Activated CD8-positive, alpha-beta T cell treated with anti-CD3 and anti-CD28 coated beads for 36 hours (primary cell): ENCODE measurements at regions of chr12 and their contacts with region 1.

Region 1: DNA sequence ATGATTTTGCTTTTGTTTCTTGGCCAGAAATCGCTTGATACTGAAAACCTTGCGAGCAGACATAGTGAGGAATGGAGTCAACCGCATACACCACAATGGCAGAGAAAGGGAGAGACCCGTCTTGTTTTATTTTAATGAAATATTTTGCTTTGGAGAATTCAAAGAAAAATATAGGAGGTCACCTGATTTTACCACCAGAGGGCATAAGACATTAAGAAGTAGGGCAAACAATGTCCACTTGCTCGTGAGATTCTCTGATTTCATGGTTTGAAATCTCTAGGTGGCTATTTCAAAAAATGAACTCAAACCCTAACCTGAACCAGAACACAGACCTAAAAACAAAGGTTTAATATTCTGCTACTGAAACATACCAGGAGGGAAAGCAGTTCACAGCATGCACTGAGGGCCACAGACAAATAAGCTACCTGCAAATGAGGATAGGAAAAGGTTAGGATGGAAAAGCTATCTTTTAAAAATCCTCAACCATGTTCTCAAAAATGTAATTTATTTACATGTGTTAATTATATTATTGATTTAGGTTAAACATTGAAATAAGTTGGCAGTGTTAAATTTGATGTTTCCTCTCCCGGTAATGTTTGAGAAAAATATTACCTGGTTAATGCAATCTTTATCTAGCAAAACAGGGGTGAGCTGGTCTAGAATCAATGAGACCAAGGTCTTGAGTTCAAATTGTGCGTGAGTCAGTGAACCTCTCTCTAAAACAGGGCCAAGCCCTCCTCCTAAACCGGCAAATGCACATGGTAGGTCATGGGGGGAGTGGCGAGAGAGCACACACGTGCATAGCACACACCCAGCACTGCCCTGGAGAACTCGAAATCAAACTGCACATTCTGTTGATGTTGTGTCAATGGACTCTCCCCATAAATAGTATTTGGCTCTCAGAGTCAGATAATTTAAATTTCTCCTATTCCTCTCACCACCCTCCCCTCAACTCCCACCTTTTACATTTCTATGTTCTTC is 12.5 kb downstream of the IFNG-AS1 start:
- DNase-seq: no peak
- ATAC-seq: no peak
- H3K4me3 Mint-ChIP-seq: no peak overlapping the region
- H3K27ac Mint-ChIP-seq: peak overlapping the region; percentile 44
- H3K4me1 Mint-ChIP-seq: peaks cover 16% of the 10 kb centered on the region
- H3K27me3 Mint-ChIP-seq: no peaks in the 10 kb centered on the region
- CTCF ChIP-seq: peak; percentile 59

Region 2: DNA sequence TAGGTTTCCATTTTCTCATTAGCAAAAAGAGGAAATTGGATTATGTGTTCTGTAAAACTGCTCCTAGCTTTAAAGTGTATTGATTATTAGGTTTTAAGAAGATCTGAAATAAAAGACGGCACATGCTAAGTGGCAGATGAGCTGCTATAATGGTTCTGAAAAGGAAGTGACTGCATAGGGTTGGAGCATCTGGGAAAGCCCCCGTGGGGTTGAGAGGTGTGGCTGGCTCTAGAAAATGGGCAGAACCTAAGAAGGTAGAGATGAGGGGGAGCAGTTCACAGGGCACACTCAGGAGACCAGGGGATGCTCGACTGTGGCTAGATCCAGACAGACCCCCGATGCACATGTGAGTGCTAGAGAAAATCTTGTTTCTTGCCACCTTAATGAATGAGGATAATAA is 10.6 kb before region 1 on chr12:
- CTCF ChIA-PET with region 1: interaction called, 12 read pairs
- POLR2A ChIA-PET with region 1: no interaction called
- intact Hi-C with region 1: no loop called
- DNase-seq: peak; percentile 66
- ATAC-seq: peak; percentile 88
- H3K4me3 Mint-ChIP-seq: peak overlapping the region; percentile 47
- H3K27ac Mint-ChIP-seq: peak overlapping the region; percentile 78
- H3K4me1 Mint-ChIP-seq: peaks cover 42% of the 10 kb centered on the region
- H3K27me3 Mint-ChIP-seq: no peaks in the 10 kb centered on the region
- CTCF ChIP-seq: no peak